Activated CD8-positive, alpha-beta memory T cell treated with anti-CD3 and anti-CD28 coated beads, Interleukin-2, amount 10 ng/mL, durations not matched to agents 7 days and 5 days (primary cell): ENCODE measurements at regions of chr22 and their contacts with region 1.

Region 1: DNA sequence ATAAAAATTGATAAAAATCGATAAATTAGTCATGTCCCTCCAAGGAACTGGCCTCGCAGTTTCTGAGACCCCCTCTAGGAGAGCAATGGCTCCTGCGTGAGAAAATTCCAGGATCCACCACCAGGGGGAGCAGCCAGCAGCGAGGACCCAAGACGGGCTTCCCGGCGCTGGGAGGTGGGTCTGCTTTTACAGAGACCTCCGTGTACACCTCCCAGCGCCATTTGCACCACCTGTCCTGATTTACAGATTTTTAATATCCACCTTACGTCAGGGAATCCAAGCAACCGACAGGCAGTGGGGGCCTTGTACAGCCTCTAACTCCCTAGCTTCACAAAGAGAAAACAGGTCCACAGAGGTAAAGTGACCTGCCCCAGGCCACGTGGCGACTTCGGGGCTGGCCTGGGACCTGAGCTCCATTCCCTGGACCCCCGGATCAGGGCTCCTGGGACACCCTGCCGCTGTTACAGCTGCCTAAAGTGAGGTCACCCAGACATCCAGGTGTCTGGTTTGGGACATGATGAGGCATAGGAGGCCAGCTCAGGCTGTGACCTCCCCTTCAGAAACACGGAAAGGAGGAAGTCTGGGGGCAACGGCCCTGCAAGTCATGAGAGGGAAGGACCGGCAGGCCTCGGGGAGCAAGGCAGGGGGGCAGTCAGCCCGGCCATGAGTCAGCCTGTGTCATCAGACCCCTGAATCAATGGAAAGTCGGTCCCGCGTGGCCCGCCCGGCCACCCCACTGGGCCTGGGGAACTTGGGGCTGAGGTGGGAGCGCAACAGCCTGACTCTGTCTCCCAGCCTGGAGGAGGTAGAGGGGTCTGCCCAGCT is 3.5 kb downstream of the OSM start:
- DNase-seq: peak; percentile 86
- ATAC-seq: no peak
- H3K4me3 Mint-ChIP-seq: peak overlapping the region; percentile 98
- H3K27ac Mint-ChIP-seq: peak overlapping the region; percentile 74
- H3K4me1 Mint-ChIP-seq: peaks cover 59% of the 10 kb centered on the region
- H3K27me3 Mint-ChIP-seq: no peaks in the 10 kb centered on the region

Region 2: GRCh38 chr22:30277547-30278344 is 14.6 kb after region 1 on chr22:
- CTCF ChIA-PET with region 1: interaction called, 41 read pairs
- DNase-seq: no peak
- ATAC-seq: no peak
- H3K4me3 Mint-ChIP-seq: no peak overlapping the region
- H3K27ac Mint-ChIP-seq: no peak overlapping the region
- H3K4me1 Mint-ChIP-seq: peaks cover 70% of the 10 kb centered on the region
- H3K27me3 Mint-ChIP-seq: no peaks in the 10 kb centered on the region

Region 3: GRCh38 chr22:30326706-30327362 is 63.7 kb after region 1 on chr22 and contains the start of gene TBC1D10A:
- CTCF ChIA-PET with region 1: interaction called, 10 read pairs
- DNase-seq: peak; percentile 95
- ATAC-seq: peak; percentile 90
- H3K4me3 Mint-ChIP-seq: peak within 1 kb of the TSS; percentile 88
- H3K27ac Mint-ChIP-seq: peak within 1 kb of the TSS; percentile 80
- H3K4me1 Mint-ChIP-seq: peaks cover 42% of the 10 kb centered on the region
- H3K27me3 Mint-ChIP-seq: no peaks in the 10 kb centered on the region
- total RNA-seq, gene TBC1D10A: 32.2 to 48.1 TPM

Region 4: DNA sequence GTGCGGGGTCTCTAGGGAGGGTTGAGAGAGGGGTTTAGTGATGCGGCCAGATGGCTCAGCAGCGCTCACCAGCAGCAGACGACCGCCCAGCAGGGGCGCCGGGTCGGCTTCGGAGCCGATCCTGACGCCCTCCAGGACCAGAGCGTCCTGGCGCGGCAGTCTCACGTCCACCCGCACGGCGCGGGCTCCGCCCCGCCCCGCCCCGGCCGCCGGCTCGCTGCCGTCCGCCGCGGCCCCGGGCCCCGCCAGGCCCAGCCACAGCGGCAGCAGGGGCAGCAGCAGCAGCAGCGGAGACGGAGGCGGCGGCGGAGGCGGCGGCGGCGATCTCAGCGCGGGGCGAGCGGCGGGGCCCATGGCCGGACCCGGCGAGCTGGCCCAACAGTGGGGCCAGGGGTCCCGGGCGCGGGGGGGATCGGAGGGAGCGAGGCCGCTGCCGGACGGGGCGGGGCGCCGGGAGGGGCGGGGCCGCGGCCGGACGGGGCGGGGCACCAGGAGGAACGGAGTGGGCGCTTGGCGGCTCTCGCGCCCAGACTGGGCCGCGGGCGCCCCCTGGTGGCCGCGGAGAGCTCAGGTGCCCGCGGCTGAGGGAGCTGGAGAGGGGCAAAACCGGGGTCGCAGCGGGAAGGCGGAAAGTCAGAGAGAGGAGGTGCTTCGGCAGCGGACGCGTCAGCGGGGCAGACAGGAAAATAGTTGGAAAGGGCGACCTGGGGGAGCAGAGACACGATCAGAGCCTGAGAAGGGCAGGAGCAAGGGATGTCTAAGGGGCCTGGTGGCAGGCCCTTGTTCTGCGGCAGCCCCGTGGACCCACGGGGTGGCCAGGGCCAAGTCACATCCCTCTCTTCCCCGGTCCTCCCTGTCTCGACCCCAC is 124.1 kb after region 1 on chr22 and contains the start of gene RNF215:
- CTCF ChIA-PET with region 1: interaction called, 18 read pairs
- DNase-seq: peak; percentile 82
- ATAC-seq: peak; percentile 91
- H3K4me3 Mint-ChIP-seq: peak within 1 kb of the TSS; percentile 76
- H3K27ac Mint-ChIP-seq: peak within 1 kb of the TSS; percentile 78
- H3K4me1 Mint-ChIP-seq: peaks cover 22% of the 10 kb centered on the region
- H3K27me3 Mint-ChIP-seq: no peaks in the 10 kb centered on the region
- total RNA-seq, gene RNF215: 8.5 to 10.5 TPM